Common myeloid progenitor, CD34-positive (primary cell): ENCODE measurements at regions of chr6 and their contacts with region 1.

Region 1: GRCh38 chr6:33771146-33772081 is 17.5 kb downstream of the LEMD2 start:
- DNase-seq: peak; percentile 63 to 83 (median 82)
- H3K4me3 ChIP-seq: no peak overlapping the region
- H3K27ac ChIP-seq: no peak overlapping the region
- H3K4me1 ChIP-seq: peaks cover 0 to 8% (median 1%) of the 10 kb centered on the region in 4 experiments
- H3K27me3 ChIP-seq: peaks cover 0 to 24% (median 5%) of the 10 kb centered on the region in 5 experiments

Region 2: GRCh38 chr6:33744001-33744848 is 27.2 kb before region 1 on chr6:
- CTCF ChIA-PET with region 1: interaction called, 10 read pairs
- POLR2A ChIA-PET with region 1: no interaction called
- DNase-seq: peak; percentile 72 to 88 (median 84)
- H3K4me3 ChIP-seq: no peak overlapping the region
- H3K27ac ChIP-seq: no peak overlapping the region
- H3K4me1 ChIP-seq: peaks cover 0 to 5% (median 0%) of the 10 kb centered on the region in 4 experiments
- H3K27me3 ChIP-seq: peaks cover 0 to 22% (median 0%) of the 10 kb centered on the region in 5 experiments

Region 3: GRCh38 chr6:34027445-34027936 is 256.1 kb after region 1 on chr6:
- CTCF ChIA-PET with region 1: interaction called, 81 read pairs
- POLR2A ChIA-PET with region 1: no interaction called
- DNase-seq: peak; percentile 41 to 59 (median 56)
- H3K4me3 ChIP-seq: no peak overlapping the region
- H3K27ac ChIP-seq: no peak overlapping the region
- H3K4me1 ChIP-seq: peaks cover 0 to 8% (median 3%) of the 10 kb centered on the region in 4 experiments
- H3K27me3 ChIP-seq: peaks cover 0 to 8% (median 0%) of the 10 kb centered on the region in 5 experiments

Region 4: DNA sequence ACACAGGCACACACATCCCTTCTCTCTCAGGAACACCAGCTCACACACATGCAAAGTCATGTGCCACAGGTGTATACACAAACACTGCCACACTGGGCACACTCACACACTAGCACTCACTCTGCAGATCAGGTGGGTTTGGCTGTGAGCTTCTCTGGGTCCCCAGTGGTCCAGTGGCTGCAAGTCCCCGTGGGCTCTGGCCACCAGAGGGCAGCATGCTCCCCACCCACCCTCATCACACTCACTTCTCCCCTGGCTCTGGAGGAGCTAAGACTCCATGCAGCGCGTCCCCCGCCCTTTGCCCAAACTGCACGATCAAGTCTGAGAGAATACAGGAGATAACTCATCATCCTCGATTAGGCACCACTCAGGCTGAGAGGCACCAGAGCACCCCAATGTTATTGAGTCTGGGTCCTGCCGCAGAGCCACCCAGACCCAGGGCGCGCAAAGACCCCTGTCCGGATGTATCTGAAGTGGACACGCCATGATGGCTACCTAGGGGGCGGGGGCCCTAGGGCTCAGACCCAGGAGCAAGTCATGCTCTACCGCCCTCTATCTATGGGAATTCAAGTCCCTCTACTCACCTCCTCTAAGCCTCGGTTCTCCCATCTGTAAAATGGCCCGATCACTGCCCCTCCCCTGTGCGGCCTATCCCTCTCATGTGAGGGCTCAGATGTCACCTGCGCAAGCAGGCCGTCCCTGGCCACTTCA is 284.0 kb after region 1 on chr6:
- CTCF ChIA-PET with region 1: interaction called, 10 read pairs
- POLR2A ChIA-PET with region 1: no interaction called
- DNase-seq: peak; percentile 81 to 91 (median 84)
- H3K4me3 ChIP-seq: no peak overlapping the region
- H3K27ac ChIP-seq: no peak overlapping the region
- H3K4me1 ChIP-seq: peaks cover 0 to 6% (median 0%) of the 10 kb centered on the region in 4 experiments
- H3K27me3 ChIP-seq: peaks cover 0 to 5% (median 0%) of the 10 kb centered on the region in 5 experiments

Region 5: GRCh38 chr6:34154668-34155447 is 383.4 kb after region 1 on chr6:
- CTCF ChIA-PET with region 1: interaction called, 86 read pairs
- POLR2A ChIA-PET with region 1: interaction called, 3 read pairs
- DNase-seq: peak; percentile 39 to 67 (median 61)
- H3K4me3 ChIP-seq: peak overlapping the region in 2 of 7 experiments; percentile 19 to 45
- H3K27ac ChIP-seq: no peak overlapping the region
- H3K4me1 ChIP-seq: peaks cover 0 to 9% (median 7%) of the 10 kb centered on the region in 4 experiments
- H3K27me3 ChIP-seq: peaks cover 0 to 75% (median 26%) of the 10 kb centered on the region in 5 experiments